ENCODE measurements at regions of chr12 and their contacts with region 1.

Region 1: DNA sequence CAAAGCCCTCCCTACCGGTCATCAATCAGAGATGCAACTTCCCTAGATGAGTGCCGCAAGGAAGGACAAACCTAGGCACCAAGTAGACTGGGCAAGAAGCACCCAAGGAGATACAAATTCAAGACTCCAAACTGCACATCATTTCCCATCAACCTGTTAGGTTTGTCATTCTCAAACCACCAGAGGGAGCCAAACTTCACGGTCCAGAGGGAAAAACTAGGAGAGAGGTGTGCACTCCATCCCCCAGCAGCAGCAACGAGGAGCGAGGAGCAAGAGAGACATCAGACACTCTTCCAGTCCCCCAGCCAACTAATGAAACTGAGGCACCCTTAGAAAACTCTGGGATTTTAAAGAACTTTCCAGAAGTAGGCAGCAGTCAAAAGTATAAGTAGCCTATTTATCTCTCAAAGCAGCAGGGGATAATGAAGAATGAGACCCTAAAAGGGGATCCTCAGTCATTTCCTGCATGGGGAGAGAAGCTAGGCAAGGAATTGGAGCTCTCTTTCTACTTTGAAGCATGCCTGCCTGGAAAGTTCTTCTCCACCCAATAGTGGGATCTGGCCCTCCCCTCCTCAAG is 37.0 kb upstream of the NT5DC3 start:
- DNase-seq: peak; percentile 79
- H3K4me3 Mint-ChIP-seq: no peak overlapping the region
- H3K27ac Mint-ChIP-seq: no peak overlapping the region
- H3K4me1 Mint-ChIP-seq: peaks cover 24% of the 10 kb centered on the region
- H3K27me3 Mint-ChIP-seq: no peaks in the 10 kb centered on the region

Region 2: GRCh38 chr12:103626498-103626897 is 251.5 kb before region 1 on chr12:
- CTCF ChIA-PET with region 1: no interaction called
- intact Hi-C with region 1: loop called (anchors 5 kb)
- DNase-seq: peak; percentile 22
- H3K4me3 Mint-ChIP-seq: no peak overlapping the region
- H3K27ac Mint-ChIP-seq: no peak overlapping the region
- H3K4me1 Mint-ChIP-seq: no peaks in the 10 kb centered on the region
- H3K27me3 Mint-ChIP-seq: peaks cover 5% of the 10 kb centered on the region

Region 3: DNA sequence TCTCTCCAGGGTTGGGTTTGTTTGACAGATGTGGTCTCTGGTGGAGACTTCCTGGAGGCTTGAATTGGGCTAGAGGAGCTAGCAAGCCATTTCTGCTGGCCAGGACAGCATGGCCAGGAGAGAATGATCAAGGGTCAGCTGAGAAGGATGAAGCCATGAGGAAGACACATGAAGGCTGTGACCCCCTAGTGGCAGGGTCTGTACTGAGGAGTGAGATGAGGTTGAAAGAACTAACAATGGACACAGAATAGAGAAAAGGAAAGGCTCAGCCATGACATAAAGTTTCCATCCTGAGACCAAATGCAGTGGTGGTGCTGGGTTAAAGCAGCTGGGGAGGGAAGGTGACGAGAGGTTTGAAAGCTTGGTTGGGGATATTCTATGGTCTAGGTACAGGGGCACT is 126.9 kb before region 1 on chr12:
- CTCF ChIA-PET with region 1: no interaction called
- intact Hi-C with region 1: no loop called
- DNase-seq: no peak
- H3K4me3 Mint-ChIP-seq: no peak overlapping the region
- H3K27ac Mint-ChIP-seq: no peak overlapping the region
- H3K4me1 Mint-ChIP-seq: no peaks in the 10 kb centered on the region
- H3K27me3 Mint-ChIP-seq: peaks cover 2% of the 10 kb centered on the region

Region 4: DNA sequence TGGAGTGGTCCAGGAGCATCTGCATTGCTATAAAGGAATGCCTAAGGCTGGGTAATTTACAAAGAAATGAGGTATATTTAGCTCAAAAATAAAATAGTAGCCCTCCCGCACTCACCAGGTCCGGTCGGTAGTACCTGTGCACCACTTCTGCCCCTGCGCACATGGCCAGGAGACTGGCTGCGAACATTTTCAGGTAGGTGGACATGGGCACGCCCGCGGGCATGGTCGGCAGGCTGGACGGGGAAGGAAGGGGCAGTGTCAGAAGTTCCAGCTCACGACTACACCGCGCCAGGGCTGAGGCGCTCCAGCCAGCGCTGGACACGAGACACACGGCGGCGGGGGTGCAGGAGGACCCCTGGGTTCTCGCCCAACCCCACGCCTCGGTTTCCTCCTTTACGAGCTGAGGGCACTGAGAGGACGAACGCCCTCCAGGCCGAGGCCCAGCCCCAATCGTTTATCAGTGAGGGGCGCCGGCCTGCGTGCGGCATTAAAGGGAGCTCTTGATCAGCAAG is 78.5 kb after region 1 on chr12:
- CTCF ChIA-PET with region 1: interaction called, 4 read pairs
- intact Hi-C with region 1: loop called (anchors 1 kb)
- DNase-seq: peak; percentile 15
- H3K4me3 Mint-ChIP-seq: peak overlapping the region; percentile 92
- H3K27ac Mint-ChIP-seq: peak overlapping the region; percentile 93
- H3K4me1 Mint-ChIP-seq: peaks cover 48% of the 10 kb centered on the region
- H3K27me3 Mint-ChIP-seq: no peaks in the 10 kb centered on the region

Region 5: GRCh38 chr12:104057771-104058197 is 179.8 kb after region 1 on chr12:
- CTCF ChIA-PET with region 1: no interaction called
- intact Hi-C with region 1: loop called (anchors 1 kb)
- DNase-seq: peak; percentile 18
- H3K4me3 Mint-ChIP-seq: no peak overlapping the region
- H3K27ac Mint-ChIP-seq: no peak overlapping the region
- H3K4me1 Mint-ChIP-seq: no peaks in the 10 kb centered on the region
- H3K27me3 Mint-ChIP-seq: peaks cover 40% of the 10 kb centered on the region

Region 6: GRCh38 chr12:104108755-104109445 is 230.9 kb after region 1 on chr12:
- CTCF ChIA-PET with region 1: interaction called, 33 read pairs
- intact Hi-C with region 1: loop called (anchors 1 kb)
- DNase-seq: peak; percentile 96
- H3K4me3 Mint-ChIP-seq: no peak overlapping the region
- H3K27ac Mint-ChIP-seq: no peak overlapping the region
- H3K4me1 Mint-ChIP-seq: peaks cover 7% of the 10 kb centered on the region
- H3K27me3 Mint-ChIP-seq: no peaks in the 10 kb centered on the region

Region 7: DNA sequence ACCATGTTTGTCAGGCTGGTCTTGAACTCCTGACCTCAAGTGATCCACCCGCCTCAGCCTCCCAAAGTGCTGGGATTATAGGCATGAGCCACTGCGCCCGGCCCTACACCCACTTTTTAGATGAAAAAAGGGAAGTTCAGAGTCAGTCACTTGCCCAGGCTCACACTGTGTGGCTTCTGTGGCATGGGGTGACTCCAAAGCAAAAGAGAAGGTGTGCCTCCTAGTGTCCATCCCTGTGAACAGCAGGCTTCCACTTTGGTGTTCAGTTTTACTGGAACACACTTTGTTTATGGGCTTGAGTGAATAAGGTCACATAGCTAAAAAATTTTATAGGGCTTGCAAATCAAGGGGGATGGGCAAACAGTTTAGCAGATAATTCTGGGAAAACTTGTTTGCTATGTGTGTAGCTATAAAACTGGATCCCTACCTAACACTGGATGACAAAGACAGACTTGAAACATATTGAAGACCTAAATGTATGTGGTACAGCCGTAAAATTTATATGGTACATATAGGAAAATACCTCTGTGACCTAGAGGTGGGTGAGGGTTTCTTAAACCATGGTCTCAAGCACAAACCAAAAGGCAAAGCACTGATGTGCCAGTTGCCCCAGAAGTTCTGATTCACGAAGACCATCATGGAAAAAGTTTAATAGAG is 480.5 kb after region 1 on chr12:
- CTCF ChIA-PET with region 1: no interaction called
- intact Hi-C with region 1: loop called (anchors 1 kb)
- DNase-seq: peak; percentile 86
- H3K4me3 Mint-ChIP-seq: no peak overlapping the region
- H3K27ac Mint-ChIP-seq: no peak overlapping the region
- H3K4me1 Mint-ChIP-seq: no peaks in the 10 kb centered on the region
- H3K27me3 Mint-ChIP-seq: no peaks in the 10 kb centered on the region